ENCODE measurements at regions of chr3 and their contacts with region 1.

Region 1: GRCh38 chr3:15636003-15636709 is 34.6 kb downstream of the BTD start:
- DNase-seq: peak; percentile 70 to 93
- H3K4me3 ChIP-seq: peak overlapping the region; percentile 46; the same call in 1 of the 2 replicates
- H3K27ac ChIP-seq: peak overlapping the region; percentile 95
- H3K4me1 ChIP-seq: peaks cover 81% of the 10 kb centered on the region
- H3K27me3 ChIP-seq: no peaks in the 10 kb centered on the region
- CTCF ChIP-seq: no peak

Region 2: GRCh38 chr3:15427182-15427880 is 208.8 kb before region 1 on chr3 and contains the starts of genes EAF1 and METTL6:
- CTCF ChIA-PET with region 1: interaction called, 18 read pairs
- POLR2A ChIA-PET with region 1: no interaction called
- intact Hi-C with region 1: no loop called
- DNase-seq: peak; percentile 65 to 71
- H3K4me3 ChIP-seq: peak within 1 kb of the TSS; percentile 96
- H3K27ac ChIP-seq: peak within 1 kb of the TSS; percentile 52
- H3K4me1 ChIP-seq: peaks cover 20% of the 10 kb centered on the region
- H3K27me3 ChIP-seq: no peaks in the 10 kb centered on the region
- CTCF ChIP-seq: no peak; the same call in 1 of the 2 replicates
- total RNA-seq, gene EAF1: 15.8 and 16.4 TPM in 2 replicates
- total RNA-seq, gene METTL6: 14.2 and 17.2 TPM in 2 replicates

Region 3: DNA sequence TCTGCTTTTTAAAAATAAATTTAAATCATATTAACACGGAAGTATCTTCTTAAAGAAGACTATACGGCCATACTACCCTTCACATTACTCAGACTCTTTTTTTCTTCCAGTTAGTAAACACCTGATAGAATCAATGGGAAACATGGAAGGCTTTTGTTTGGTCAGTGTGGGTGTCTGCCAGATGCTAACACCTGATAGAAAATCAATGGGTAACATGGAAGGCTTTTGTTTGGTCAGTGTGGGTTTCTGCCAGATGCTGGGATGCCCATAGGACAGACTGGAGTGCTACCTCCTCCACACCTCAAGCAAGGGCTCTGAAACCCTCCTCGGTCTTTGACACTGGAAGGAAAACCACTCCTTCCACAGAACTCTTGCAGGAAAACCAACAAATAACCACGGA is 64.0 kb before region 1 on chr3:
- CTCF ChIA-PET with region 1: no interaction called
- POLR2A ChIA-PET with region 1: no interaction called
- intact Hi-C with region 1: no loop called
- DNase-seq: no peak
- H3K4me3 ChIP-seq: no peak overlapping the region
- H3K27ac ChIP-seq: no peak overlapping the region
- H3K4me1 ChIP-seq: no peaks in the 10 kb centered on the region
- H3K27me3 ChIP-seq: no peaks in the 10 kb centered on the region
- CTCF ChIP-seq: no peak

Region 4: DNA sequence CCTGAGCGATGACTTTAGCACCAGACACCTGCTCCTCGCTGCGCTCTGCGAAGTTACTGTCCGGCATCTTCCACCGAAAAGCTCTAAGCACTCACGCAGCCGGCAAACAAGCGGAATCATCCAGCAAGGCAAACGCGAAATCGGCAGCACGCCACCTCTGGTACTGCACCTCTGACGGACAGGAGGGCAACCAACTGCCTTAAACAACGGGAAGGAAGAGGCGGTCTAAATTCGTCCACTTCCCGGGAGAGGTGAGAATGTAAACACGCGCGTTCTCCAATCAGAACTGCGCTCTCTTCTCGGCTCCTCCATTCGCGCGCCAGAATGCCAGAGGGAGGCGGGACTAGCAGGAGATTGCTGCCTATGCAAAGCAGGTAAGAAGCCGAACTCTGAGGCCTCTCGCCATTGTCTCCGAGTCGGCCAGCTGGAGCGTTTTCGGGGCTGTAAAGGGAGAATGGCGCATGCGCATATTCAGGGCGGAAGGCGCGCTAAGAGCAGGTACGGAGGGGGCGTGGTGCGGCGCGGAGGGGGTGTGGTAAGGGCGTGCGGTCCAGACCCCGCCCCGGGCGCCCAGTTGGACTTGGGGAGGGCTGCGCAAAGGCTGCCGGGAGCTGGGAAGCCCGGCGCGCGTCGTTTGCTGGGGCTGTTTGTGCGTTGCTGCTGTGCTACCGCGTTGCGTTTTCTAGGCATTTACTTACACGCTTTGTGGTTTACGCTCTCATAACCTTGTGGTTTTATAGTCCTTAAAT is 34.6 kb before region 1 on chr3 and contains the starts of genes BTD and HACL1:
- CTCF ChIA-PET with region 1: no interaction called
- POLR2A ChIA-PET with region 1: no interaction called
- intact Hi-C with region 1: loop called (anchors 5 kb)
- DNase-seq: peak; percentile 96 to 98
- H3K4me3 ChIP-seq: peak within 1 kb of the TSS; percentile 79
- H3K27ac ChIP-seq: peak within 1 kb of the TSS; percentile 66
- H3K4me1 ChIP-seq: peaks cover 18% of the 10 kb centered on the region
- H3K27me3 ChIP-seq: no peaks in the 10 kb centered on the region
- CTCF ChIP-seq: peak; percentile 33; the same call in 1 of the 2 replicates
- total RNA-seq, gene BTD: 15.6 and 18.1 TPM in 2 replicates
- total RNA-seq, gene HACL1: 28.7 and 31.7 TPM in 2 replicates

Region 5: DNA sequence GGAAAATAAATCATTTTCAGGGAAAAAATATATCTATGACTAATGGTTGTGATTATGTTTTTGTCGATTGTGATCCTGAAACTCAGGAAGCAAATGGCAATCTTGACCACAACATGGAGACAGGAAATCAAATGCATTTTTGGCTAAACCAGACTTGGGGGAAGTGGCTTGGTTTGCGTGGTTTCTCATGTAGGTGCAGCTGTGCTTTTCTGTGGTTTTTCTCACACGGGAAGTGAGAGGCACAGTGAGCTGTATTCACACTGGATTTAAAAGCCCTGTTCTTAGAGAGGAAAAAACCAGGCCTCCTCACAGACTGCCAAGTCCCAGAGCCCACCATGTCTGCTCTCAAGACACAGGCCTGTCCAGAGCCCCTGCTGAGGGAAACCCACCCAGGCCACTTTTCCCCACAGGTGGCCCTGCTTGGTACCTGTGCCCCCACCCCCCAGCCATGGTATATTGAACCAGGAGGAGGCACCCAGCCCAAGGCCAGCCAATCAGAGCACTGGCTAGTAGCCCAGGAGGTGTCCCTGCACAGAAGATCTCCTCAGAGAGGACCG is 11.5 kb after region 1 on chr3:
- CTCF ChIA-PET with region 1: interaction called, 3 read pairs
- POLR2A ChIA-PET with region 1: interaction called, 6 read pairs
- intact Hi-C with region 1: loop called (anchors 1 kb)
- DNase-seq: peak; percentile 25 to 64
- H3K4me3 ChIP-seq: no peak overlapping the region; the same call in 1 of the 2 replicates
- H3K27ac ChIP-seq: peak overlapping the region; percentile 82
- H3K4me1 ChIP-seq: peaks cover 40% of the 10 kb centered on the region
- H3K27me3 ChIP-seq: no peaks in the 10 kb centered on the region
- CTCF ChIP-seq: no peak

Measured in PC-9 (cell line).